ENCODE measurements at regions of chr20 and their contacts with region 1.

Region 1: DNA sequence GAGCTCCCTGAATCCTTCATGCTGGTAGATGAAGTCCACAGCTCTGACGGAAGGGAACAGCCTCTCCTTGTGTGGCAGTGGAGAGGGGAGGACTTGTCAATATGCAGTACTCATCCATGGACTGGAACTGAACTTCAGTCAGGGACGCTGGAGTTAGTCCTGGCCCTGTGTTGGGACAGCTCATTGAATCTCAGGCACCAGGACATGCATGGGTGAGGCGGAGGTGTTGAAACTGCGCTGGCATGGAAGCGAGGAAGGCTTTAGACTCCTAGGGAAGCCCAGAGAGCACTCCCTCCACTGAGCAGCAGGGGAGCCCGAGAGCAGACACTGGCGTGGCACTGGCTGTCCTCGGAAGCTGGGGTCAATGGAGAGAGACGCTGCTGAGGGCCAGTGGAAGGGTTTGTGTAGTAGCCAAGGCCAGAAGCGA is 161.3 kb upstream of the GGTLC1 start:
- DNase-seq: no peak
- H3K4me3 ChIP-seq: no peak overlapping the region
- H3K27ac ChIP-seq: no peak overlapping the region
- H3K4me1 ChIP-seq: no peaks in the 10 kb centered on the region
- H3K27me3 ChIP-seq: no peaks in the 10 kb centered on the region
- CTCF ChIP-seq: peak; percentile 29 to 35

Region 2: DNA sequence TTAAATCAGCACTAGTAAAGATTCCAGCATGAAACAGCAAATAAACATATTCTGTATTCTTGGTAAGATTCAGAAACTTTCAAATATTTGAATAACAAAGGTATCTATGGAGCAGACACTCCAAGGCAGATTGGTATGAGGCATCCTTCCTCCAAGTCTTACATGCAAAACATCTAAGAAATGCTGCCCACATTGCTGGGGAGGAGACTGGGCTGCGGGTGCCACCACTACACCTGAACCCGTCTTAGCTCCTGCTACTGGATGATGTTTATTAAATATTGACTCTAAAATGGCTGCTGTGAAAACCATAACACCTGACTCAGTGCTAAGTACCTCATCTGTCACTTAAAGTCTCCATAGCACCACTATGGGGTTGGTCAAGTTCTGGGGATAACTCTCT is 26.8 kb after region 1 on chr20:
- CTCF ChIA-PET with region 1: no interaction called
- dilution Hi-C with region 1: no loop called
- in situ Hi-C with region 1: no loop called
- intact Hi-C with region 1: no loop called
- DNase-seq: no peak
- H3K4me3 ChIP-seq: no peak overlapping the region
- H3K27ac ChIP-seq: no peak overlapping the region
- H3K4me1 ChIP-seq: no peaks in the 10 kb centered on the region
- H3K27me3 ChIP-seq: no peaks in the 10 kb centered on the region
- CTCF ChIP-seq: no peak

Region 3: DNA sequence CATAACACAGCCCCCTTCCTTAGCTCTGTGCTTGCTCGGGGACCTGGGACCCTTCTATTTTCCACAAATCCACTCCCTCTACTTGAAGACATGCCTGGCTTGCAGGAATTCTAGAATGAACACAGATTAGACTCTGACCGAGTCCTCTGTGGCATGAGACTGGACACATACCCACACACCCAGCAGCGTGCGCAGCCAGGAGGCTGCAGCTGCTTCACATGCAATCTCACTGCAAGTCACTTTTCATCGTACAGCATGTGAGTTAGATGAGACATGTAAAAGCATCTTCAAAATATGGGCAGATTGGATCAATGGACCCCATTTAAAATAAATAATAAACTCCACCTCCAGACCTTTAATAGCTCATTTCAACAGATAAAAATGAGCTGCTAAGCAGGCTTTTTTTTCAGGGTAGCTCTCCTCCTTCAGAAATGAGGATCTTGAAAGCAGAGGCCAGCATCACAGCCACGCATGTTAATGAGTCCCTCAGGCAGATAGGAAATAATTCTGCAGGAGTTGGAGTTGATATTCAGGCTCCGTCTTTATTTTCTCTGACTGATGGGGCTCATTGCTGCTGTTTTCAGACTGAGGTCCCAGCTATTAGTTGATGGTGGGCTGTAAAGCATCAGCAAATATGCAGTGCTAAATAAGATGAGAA is 53.8 kb after region 1 on chr20:
- CTCF ChIA-PET with region 1: no interaction called
- dilution Hi-C with region 1: loop called (anchors 5 kb)
- in situ Hi-C with region 1: no loop called
- intact Hi-C with region 1: no loop called
- DNase-seq: no peak
- H3K4me3 ChIP-seq: no peak overlapping the region
- H3K27ac ChIP-seq: no peak overlapping the region
- H3K4me1 ChIP-seq: no peaks in the 10 kb centered on the region
- H3K27me3 ChIP-seq: no peaks in the 10 kb centered on the region
- CTCF ChIP-seq: no peak

Region 4: DNA sequence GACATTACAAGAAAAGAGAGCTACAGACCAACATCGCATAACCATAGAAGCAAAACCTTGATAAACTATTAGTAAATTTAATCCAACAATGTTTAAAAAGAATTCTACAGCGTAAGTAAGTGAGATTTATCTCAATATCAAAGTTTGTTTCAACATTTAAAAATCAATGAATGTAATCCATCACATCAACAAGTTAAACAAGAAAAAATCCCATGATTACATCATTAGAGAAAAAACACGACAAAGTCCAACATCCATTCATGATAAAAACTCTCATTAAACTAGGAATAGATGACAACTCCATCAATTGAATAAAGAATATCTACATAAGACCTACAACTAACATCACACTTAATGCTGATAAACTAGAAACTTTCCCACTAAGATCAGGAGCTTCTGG is 77.7 kb after region 1 on chr20:
- CTCF ChIA-PET with region 1: no interaction called
- dilution Hi-C with region 1: loop called (anchors 5 kb)
- in situ Hi-C with region 1: no loop called
- intact Hi-C with region 1: no loop called
- DNase-seq: no peak
- H3K4me3 ChIP-seq: no peak overlapping the region
- H3K27ac ChIP-seq: no peak overlapping the region
- H3K4me1 ChIP-seq: no peaks in the 10 kb centered on the region
- H3K27me3 ChIP-seq: no peaks in the 10 kb centered on the region
- CTCF ChIP-seq: no peak

Measured in mammary epithelial cell (primary cell).